Activated B cell treated with CpG ODN at 0.5 μM for 24 hours (primary cell): ENCODE measurements at regions of chr19 and their contacts with region 1.

Region 1: GRCh38 chr19:34171877-34172660 is at the start of gene LSM14A:
- DNase-seq: peak; percentile 93
- ATAC-seq: peak; percentile 78
- H3K4me3 Mint-ChIP-seq: peak within 1 kb of the TSS; percentile 97
- H3K27ac Mint-ChIP-seq: peak within 1 kb of the TSS; percentile 98
- H3K4me1 Mint-ChIP-seq: peaks cover 55% of the 10 kb centered on the region
- H3K27me3 Mint-ChIP-seq: no peaks in the 10 kb centered on the region
- CTCF ChIP-seq: no peak
- total RNA-seq, gene LSM14A: 136 and 142 TPM in 2 replicates

Region 2: DNA sequence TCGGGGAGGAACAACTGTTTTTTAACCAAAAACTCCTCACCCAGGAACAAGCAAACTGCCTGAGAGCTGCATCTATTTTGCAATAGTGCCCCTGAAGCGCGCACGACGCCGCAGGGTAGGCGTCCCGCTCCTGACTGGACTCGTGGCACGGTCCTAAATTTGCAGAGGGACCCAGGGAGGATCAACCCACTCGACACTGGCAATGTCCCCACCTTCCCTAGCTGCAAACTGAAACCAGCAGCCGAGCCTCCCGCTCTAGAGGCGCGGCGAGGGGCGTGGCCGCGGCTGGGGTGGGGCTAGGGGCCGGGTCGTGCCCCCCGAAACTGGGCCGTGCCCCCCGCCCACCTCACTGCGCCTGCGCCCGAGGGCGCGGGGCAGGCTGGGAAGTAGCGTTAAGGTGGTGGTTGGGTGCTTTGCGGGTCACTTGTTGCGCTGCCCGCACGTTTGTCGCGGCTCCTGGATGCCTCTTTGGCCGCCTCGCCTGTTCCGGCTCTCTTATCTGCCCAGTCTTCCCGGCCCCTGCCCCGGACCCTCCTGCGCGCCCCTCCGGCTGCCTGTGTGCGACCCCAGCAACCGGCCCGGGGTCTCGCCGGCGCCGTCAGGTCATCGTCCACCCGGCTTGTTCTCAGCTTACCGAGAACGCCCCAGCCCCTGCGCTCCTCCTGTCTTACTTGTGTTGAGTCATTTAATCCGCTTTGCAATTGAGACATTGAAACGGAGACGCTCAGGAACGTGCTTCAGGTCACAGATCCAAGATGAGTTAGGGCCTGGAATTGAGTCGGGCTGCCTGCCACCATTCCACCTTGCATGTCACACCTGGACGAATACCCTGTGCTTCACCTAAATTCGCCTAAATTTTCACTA is 37.6 kb before region 1 on chr19:
- CTCF ChIA-PET with region 1: no interaction called
- POLR2A ChIA-PET with region 1: interaction called, 28 read pairs
- intact Hi-C with region 1: loop called (anchors 1 kb)
- DNase-seq: peak; percentile 96
- ATAC-seq: peak; percentile 99
- H3K4me3 Mint-ChIP-seq: peak overlapping the region; percentile 93
- H3K27ac Mint-ChIP-seq: peak overlapping the region; percentile 91
- H3K4me1 Mint-ChIP-seq: peaks cover 5% of the 10 kb centered on the region
- H3K27me3 Mint-ChIP-seq: no peaks in the 10 kb centered on the region
- CTCF ChIP-seq: no peak

Region 3: DNA sequence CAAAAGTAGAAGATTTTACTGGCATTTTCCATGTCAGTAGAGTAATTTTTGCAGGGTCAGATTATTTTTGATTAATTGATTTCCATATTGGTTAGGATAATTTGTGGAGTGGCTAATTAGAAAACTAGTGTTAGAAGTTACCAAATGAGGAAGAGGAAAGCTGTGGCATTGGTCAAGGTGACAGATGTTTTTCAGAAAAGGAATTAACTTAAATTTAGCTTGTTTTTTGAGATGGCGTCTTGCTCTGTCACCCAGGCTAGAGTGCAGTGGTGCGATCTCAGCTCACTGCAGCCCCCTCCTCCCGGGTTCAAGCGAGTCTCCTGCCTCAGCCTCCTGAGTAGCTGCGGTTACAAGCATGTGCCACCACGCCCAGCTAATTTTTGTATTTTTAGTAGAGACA is 29.1 kb after region 1 on chr19:
- CTCF ChIA-PET with region 1: no interaction called
- POLR2A ChIA-PET with region 1: interaction called, 12 read pairs
- intact Hi-C with region 1: no loop called
- DNase-seq: no peak
- ATAC-seq: no peak
- H3K4me3 Mint-ChIP-seq: no peak overlapping the region
- H3K27ac Mint-ChIP-seq: peak overlapping the region; percentile 77
- H3K4me1 Mint-ChIP-seq: peaks cover 43% of the 10 kb centered on the region
- H3K27me3 Mint-ChIP-seq: no peaks in the 10 kb centered on the region
- CTCF ChIP-seq: no peak

Region 4: GRCh38 chr19:34269968-34270621 is 98.0 kb after region 1 on chr19:
- CTCF ChIA-PET with region 1: no interaction called
- POLR2A ChIA-PET with region 1: interaction called, 13 read pairs
- intact Hi-C with region 1: no loop called
- DNase-seq: peak; percentile 47
- ATAC-seq: peak; percentile 87
- H3K4me3 Mint-ChIP-seq: peak overlapping the region; percentile 77
- H3K27ac Mint-ChIP-seq: peak overlapping the region; percentile 95
- H3K4me1 Mint-ChIP-seq: peaks cover 85% of the 10 kb centered on the region
- H3K27me3 Mint-ChIP-seq: no peaks in the 10 kb centered on the region
- CTCF ChIP-seq: no peak

Region 5: GRCh38 chr19:35224681-35225571 is 1052.9 kb after region 1 on chr19:
- CTCF ChIA-PET with region 1: no interaction called
- POLR2A ChIA-PET with region 1: no interaction called
- intact Hi-C with region 1: no loop called
- DNase-seq: peak; percentile 25
- ATAC-seq: peak; percentile 85
- H3K4me3 Mint-ChIP-seq: no peak overlapping the region
- H3K27ac Mint-ChIP-seq: no peak overlapping the region
- H3K4me1 Mint-ChIP-seq: peaks cover 26% of the 10 kb centered on the region
- H3K27me3 Mint-ChIP-seq: no peaks in the 10 kb centered on the region
- CTCF ChIP-seq: no peak